Posterior cingulate gyrus (tissue), 11 donors: ENCODE measurements at regions of chr16 and their contacts with region 1.

Region 1: GRCh38 chr16:2720719-2721633 is 952 bp upstream of the PRSS27 start:
- DNase-seq: peak in 9 of 10 donors; percentile 25 to 95 (median 70)

Region 2: DNA sequence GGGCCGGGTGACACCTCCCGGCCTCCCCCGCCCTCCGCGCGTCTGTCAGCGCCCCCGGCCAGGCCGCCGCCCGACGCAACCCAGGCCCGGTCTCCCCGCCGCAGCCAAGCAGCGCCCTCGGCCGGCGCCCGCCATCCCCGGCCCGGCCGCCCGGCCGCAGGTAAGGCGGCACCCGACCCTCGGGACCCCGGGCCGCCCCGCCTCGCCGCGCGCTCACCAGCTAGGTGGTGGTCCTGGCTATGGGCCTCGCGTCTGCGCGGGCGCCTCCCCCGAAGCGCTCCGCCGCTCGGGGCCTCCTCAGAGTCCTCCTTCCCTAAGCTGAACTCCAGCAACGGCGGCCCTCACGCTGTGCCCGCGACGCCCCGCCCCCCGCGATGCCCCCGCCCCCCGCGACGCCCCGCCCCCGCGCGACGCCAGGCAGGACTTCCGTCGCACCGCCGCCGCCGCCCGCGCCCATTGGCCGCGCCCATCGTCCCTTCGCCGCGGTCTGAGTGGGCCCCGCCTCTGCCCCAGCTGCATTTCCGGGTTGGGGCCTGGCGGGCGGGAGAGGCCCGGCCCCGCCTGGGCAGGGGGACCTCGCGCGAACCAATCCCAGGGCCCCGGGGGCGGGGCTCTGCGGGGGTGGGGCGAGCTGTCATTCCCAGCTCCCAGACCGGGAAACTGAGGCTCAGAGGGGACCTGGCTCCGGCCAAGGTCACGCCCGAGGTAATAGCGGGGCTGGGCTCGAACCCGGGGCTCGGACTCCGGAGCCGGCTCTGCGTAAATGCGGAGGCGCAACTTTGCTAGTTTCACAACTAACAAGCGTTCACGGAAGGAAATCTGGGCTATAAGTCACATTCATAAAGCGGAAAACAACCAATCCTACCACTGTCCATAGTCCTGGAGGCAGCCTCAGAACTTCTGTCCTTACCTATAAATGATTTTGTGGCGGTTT is 47.6 kb before region 1 on chr16:
- intact Hi-C with region 1: loop called (anchors 5 kb)
- DNase-seq: peak; percentile 86 to 100 (median 96)

Region 3: DNA sequence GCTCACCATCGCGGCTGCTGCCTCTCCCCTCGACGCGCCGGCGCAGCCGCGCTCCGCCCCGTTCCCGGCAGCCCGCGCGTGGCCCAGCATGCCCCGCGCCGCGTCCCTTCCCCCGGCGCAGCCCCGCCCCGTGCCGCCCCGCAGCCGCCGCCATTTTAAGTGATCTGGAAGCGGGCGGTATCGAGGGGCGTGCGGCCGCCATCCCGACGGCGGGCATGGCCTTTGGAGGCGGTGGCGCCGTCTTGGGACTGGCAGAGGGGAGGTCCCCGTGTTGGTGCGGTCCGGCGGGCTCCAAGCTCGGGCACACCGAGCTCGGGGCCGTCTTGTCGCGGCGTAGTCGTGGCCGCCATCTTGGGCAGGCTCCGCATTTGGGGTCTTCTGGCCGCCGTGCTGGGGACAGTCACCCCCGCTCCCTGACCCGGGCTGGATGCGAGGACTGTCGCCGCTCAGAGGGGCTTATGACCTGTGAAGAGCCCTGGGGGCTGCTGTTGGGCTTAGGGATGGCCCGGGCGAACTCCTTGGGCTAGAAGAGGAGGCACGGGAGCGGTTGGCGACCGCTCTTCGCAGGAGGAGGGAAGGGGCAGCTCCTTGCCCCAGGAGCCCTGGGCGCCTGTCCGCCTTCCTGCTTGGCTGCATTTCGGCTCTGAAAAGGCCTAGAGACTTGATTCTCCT is 56.4 kb after region 1 on chr16 and contains the start of gene ELOB:
- intact Hi-C with region 1: no loop called
- DNase-seq: peak; percentile 69 to 97 (median 80)

Region 4: DNA sequence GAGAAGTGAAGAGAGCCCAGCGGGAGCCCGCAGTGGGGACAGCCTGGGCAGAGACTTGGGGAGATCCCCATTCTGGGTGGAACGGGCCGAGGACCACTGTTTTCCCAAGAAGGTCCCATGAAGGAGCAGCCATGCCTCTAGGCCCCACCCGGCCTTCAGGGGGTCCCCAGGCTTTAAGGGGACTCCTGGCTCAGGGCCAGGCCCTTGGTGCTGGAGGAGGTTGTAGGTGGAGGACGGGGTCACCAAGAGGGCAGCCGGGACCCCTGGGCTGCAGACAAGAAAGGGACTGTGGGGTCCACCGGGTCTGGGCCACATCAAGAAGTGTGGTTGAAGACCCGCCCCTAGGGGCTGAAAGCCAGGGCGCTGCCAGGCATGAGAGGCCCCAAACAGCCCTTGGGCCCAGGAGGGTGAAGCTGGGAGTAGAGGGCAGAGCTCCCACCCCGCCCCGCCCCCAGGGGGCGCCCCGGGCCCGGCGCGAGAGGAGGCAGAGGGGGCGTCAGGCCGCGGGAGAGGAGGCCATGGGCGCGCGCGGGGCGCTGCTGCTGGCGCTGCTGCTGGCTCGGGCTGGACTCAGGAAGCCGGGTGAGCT is 95.9 kb after region 1 on chr16 and contains the start of gene PRSS21:
- intact Hi-C with region 1: no loop called
- DNase-seq: peak in 2 of 10 donors; percentile 73 to 76